ENCODE measurements at regions of chr6 and their contacts with region 1.

Region 1: DNA sequence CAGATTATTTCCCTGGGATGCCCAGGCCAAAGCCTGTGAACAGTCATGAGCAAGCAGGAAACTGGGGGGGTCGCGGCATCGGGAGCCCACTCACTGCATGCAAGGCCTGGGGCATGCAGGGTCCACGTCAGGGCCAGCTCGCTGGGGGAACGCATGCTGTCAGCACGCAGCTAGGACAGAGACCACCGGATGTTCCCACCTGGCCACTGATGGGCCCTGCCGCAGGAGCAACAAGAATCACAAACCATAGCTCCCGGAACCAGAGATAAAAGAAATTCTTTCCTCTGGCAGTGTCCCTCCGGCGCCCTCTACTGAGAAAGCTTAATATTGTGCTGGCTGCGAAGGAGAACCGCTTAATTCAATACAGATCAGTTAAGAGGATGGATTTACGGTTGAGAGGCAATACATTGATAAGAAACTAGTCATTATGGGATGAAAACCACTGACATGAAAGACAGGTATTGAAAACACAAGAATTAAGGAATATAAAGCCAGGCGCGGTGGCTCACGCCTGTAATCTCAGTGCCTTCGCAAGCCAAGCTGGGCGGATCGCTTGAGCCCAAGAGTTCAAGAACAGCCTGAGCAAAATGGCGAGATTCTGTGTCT is 32.6 kb downstream of the C6orf15 start:
- DNase-seq: peak; percentile 82
- ATAC-seq: peak; percentile 85
- H3K4me3 Mint-ChIP-seq: peak overlapping the region; percentile 40
- H3K27ac Mint-ChIP-seq: no peak overlapping the region
- H3K4me1 Mint-ChIP-seq: peaks cover 9% of the 10 kb centered on the region
- H3K27me3 Mint-ChIP-seq: peaks cover 6% of the 10 kb centered on the region

Region 2: GRCh38 chr6:30821862-30822782 is 257.6 kb before region 1 on chr6:
- CTCF ChIA-PET with region 1: interaction called, 43 read pairs
- POLR2A ChIA-PET with region 1: no interaction called
- DNase-seq: no peak
- ATAC-seq: no peak
- H3K4me3 Mint-ChIP-seq: no peak overlapping the region
- H3K27ac Mint-ChIP-seq: peak overlapping the region; percentile 39
- H3K4me1 Mint-ChIP-seq: peaks cover 60% of the 10 kb centered on the region
- H3K27me3 Mint-ChIP-seq: no peaks in the 10 kb centered on the region

Region 3: DNA sequence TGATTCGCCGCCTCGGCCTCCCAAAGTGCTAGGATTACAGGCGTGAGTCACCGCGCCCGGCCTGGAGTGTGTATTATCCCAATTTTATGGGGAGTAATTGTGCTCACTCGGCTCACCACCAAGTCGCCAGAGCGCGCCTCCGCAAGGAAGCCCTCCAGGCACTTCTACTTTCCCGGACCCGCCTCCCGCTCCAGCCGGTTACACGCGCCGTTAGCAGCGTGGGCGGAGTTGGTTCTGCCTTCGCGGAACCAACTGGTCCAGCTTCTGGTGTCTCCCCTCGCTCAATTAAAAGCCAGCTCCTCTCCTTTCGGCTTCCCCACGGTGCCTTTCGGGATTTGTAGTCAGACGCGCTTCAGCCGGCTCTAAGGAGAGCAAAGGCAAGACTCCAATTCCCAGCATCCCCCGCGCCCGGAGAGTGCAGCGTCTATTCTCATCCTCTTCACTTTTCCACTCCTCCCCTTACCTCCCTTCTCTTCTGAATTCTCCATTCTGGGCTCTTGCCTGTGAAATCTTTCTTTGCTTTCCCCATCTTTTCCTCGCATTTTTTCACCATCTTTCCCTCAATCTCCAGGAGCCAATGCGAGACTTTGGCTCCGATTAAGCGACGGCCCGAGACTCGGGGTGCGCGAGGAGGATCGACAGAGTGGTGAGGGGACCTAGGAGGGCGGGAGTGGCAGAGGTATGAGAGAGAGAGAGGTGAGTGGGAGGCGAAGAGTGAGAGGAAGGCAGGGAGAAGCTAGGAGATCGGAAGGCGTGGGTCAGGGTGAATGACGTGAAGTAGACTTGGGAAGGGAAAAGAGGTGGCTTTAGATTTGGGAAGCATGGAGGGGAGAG is 171.8 kb before region 1 on chr6 and contains the start of gene GTF2H4:
- CTCF ChIA-PET with region 1: interaction called, 97 read pairs
- POLR2A ChIA-PET with region 1: interaction called, 3 read pairs
- DNase-seq: peak; percentile 96
- ATAC-seq: peak; percentile 98
- H3K4me3 Mint-ChIP-seq: peak within 1 kb of the TSS; percentile 99
- H3K27ac Mint-ChIP-seq: peak within 1 kb of the TSS; percentile 66
- H3K4me1 Mint-ChIP-seq: peaks cover 22% of the 10 kb centered on the region
- H3K27me3 Mint-ChIP-seq: no peaks in the 10 kb centered on the region
- total RNA-seq, gene GTF2H4: 30.0 to 30.1 TPM

Region 4: DNA sequence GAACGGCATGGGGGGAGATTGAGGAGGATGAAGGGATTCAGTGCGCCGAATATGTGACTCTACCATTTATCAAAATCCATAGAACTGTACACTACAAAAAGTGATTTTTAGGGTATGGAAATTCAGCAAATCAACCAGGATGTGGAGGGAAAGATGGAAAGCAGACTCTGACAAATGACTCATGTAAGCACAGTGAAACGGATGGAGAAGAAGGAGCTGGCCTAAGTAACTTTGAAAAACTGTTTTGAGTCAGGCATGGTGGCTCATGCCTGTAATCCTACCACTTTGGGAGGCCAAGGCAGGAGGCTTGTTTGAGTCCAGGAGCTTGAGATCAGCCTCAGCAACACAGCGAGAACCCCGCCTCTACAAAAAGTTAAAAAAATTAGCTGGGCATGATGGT is 30.2 kb before region 1 on chr6:
- CTCF ChIA-PET with region 1: interaction called, 12 read pairs
- POLR2A ChIA-PET with region 1: no interaction called
- DNase-seq: no peak
- ATAC-seq: no peak
- H3K4me3 Mint-ChIP-seq: no peak overlapping the region
- H3K27ac Mint-ChIP-seq: no peak overlapping the region
- H3K4me1 Mint-ChIP-seq: no peaks in the 10 kb centered on the region
- H3K27me3 Mint-ChIP-seq: peaks cover 38% of the 10 kb centered on the region

Region 5: GRCh38 chr6:31058128-31058894 is 21.4 kb before region 1 on chr6:
- CTCF ChIA-PET with region 1: interaction called, 10 read pairs
- POLR2A ChIA-PET with region 1: no interaction called
- DNase-seq: no peak
- ATAC-seq: no peak
- H3K4me3 Mint-ChIP-seq: no peak overlapping the region
- H3K27ac Mint-ChIP-seq: no peak overlapping the region
- H3K4me1 Mint-ChIP-seq: no peaks in the 10 kb centered on the region
- H3K27me3 Mint-ChIP-seq: peaks cover 30% of the 10 kb centered on the region

Region 6: GRCh38 chr6:31068669-31069340 is 11.0 kb before region 1 on chr6:
- CTCF ChIA-PET with region 1: interaction called, 34 read pairs
- POLR2A ChIA-PET with region 1: no interaction called
- DNase-seq: peak; percentile 68
- ATAC-seq: peak; percentile 94
- H3K4me3 Mint-ChIP-seq: no peak overlapping the region
- H3K27ac Mint-ChIP-seq: no peak overlapping the region
- H3K4me1 Mint-ChIP-seq: no peaks in the 10 kb centered on the region
- H3K27me3 Mint-ChIP-seq: peaks cover 9% of the 10 kb centered on the region

Region 7: GRCh38 chr6:31094389-31094881 is 14.7 kb after region 1 on chr6:
- CTCF ChIA-PET with region 1: interaction called, 27 read pairs
- POLR2A ChIA-PET with region 1: interaction called, 4 read pairs
- DNase-seq: peak; percentile 49
- ATAC-seq: peak; percentile 73
- H3K4me3 Mint-ChIP-seq: no peak overlapping the region
- H3K27ac Mint-ChIP-seq: peak overlapping the region; percentile 85
- H3K4me1 Mint-ChIP-seq: peaks cover 16% of the 10 kb centered on the region
- H3K27me3 Mint-ChIP-seq: peaks cover 3% of the 10 kb centered on the region

Measured in activated CD8-positive, alpha-beta T cell treated with anti-CD3 and anti-CD28 coated beads, Interleukin-2, amount 10 ng/mL, durations not matched to agents 7 days and 5 days (primary cell).